Common myeloid progenitor, CD34-positive (primary cell): ENCODE measurements at regions of chr15 and their contacts with region 1.

Region 1: DNA sequence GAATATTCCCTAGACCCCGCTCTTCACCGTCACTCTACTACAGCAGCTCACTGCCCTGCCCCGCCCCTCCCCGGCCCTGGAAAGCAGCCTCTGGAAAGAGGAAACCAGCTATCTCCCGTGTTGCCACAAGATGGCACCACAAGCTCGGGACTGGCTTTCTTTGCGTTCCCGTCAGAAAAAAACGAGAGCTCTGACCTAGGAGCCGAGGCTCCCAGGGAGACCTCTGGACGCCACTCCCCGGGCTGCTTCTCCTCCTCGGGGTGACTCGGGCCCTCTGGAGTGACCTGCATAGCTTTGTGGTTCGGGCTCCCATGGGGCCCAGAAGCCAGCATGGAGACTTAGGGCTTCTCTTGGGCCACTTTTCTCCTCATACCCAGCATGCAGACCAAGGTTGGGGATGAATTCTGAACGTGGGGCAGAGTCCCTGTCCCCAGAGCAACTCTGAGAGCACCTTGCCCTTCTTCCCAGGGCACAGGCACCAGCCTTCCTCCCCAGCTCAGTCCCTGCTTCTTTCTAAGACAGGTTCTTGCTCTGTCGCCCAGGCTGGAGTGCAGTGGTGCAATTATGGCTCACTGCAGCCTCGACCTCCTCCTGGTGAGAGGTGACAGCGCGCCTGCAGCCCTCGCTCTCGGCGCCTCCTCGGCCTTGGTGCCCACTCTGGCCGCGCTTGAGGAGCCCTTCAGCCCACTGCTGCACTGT is 19.0 kb downstream of the STOML1 start:
- DNase-seq: peak; percentile 78 to 89 (median 85)
- H3K4me3 ChIP-seq: peak overlapping the region in 5 of 7 experiments; percentile 19 to 64 (median 43)
- H3K27ac ChIP-seq: no peak overlapping the region
- H3K4me1 ChIP-seq: peaks cover 3 to 37% (median 30%) of the 10 kb centered on the region in 4 experiments
- H3K27me3 ChIP-seq: no peaks in the 10 kb centered on the region

Region 2: GRCh38 chr15:73794443-73795133 is 178.5 kb before region 1 on chr15:
- CTCF ChIA-PET with region 1: no interaction called
- POLR2A ChIA-PET with region 1: no interaction called
- DNase-seq: no peak
- H3K4me3 ChIP-seq: no peak overlapping the region
- H3K27ac ChIP-seq: no peak overlapping the region
- H3K4me1 ChIP-seq: peaks cover 0 to 7% (median 5%) of the 10 kb centered on the region in 4 experiments
- H3K27me3 ChIP-seq: no peaks in the 10 kb centered on the region

Region 3: DNA sequence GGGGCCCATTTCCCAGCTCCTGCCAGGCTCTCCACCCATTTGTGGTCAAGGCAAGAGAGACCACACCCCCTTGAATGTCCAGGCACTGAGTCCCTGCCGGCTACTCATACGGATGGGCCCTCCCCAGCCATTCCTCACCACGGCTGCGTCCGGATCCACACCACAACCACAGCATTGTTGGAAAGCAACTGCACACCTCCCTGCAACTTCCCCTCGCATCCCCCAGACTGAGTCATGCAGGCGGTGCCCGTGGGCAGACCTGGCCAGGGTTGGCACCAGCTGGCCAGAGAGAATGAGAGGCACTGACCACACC is 16.4 kb before region 1 on chr15:
- CTCF ChIA-PET with region 1: interaction called, 18 read pairs
- POLR2A ChIA-PET with region 1: no interaction called
- DNase-seq: peak; percentile 52 to 96 (median 95)
- H3K4me3 ChIP-seq: no peak overlapping the region
- H3K27ac ChIP-seq: no peak overlapping the region
- H3K4me1 ChIP-seq: peaks cover 9 to 97% (median 90%) of the 10 kb centered on the region in 4 experiments
- H3K27me3 ChIP-seq: no peaks in the 10 kb centered on the region

Region 4: GRCh38 chr15:74011610-74012009 is 38.5 kb after region 1 on chr15:
- CTCF ChIA-PET with region 1: interaction called, 24 read pairs
- POLR2A ChIA-PET with region 1: no interaction called
- DNase-seq: no peak
- H3K4me3 ChIP-seq: peak overlapping the region in 4 of 7 experiments; percentile 3 to 61 (median 46)
- H3K27ac ChIP-seq: peak overlapping the region; percentile 55
- H3K4me1 ChIP-seq: peaks cover 11 to 66% (median 40%) of the 10 kb centered on the region in 4 experiments
- H3K27me3 ChIP-seq: no peaks in the 10 kb centered on the region

Region 5: GRCh38 chr15:74044267-74045110 is 71.4 kb after region 1 on chr15:
- CTCF ChIA-PET with region 1: interaction called, 59 read pairs
- POLR2A ChIA-PET with region 1: no interaction called
- DNase-seq: no peak
- H3K4me3 ChIP-seq: no peak overlapping the region
- H3K27ac ChIP-seq: no peak overlapping the region
- H3K4me1 ChIP-seq: peaks cover 0 to 17% (median 8%) of the 10 kb centered on the region in 4 experiments
- H3K27me3 ChIP-seq: no peaks in the 10 kb centered on the region

Region 6: DNA sequence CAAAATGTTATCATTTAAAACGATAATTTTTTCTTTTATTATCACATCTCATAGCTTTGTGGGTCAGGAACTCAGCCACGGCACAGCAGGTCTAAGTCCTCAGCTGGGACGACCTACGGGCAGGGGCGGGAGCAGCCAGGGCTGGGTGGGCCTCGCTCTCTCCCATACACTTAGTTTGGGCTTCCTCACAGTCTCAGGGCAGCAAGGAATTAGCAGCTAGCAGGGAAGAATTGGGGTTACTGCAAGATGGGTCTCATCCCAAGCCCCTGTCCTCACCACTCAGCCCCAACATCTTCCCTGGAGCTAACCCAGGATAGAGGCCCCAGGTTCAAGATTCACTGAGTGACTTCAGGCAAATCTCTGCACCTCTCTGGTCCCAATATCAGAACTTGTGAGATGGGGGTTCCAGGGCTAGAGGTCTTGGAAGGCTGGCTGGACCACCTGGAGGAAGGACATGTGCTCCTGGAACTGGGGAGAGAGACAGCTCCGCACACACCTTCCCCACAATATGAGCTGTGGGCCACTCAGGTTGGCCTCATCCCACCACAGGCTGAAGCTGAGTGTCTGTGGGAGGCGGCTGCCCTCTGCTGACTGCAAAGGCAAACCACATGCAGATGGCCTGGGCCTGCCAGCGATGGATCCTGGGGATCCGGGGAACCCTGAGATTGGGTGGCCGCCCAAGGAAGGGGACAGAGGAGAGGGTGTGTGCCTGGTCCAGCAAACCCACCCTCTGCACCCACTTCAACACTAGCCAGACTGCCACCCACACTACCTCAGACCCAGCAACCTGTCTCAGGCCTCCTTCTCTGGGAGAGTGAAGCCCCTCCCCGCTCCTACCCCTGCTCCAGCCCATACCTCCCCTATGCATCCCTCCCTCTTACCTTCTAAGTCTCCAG is 349.3 kb after region 1 on chr15:
- CTCF ChIA-PET with region 1: interaction called, 12 read pairs
- POLR2A ChIA-PET with region 1: no interaction called
- DNase-seq: peak; percentile 50 to 78 (median 71)
- H3K4me3 ChIP-seq: no peak overlapping the region
- H3K27ac ChIP-seq: no peak overlapping the region
- H3K4me1 ChIP-seq: peaks cover 0 to 53% (median 31%) of the 10 kb centered on the region in 4 experiments
- H3K27me3 ChIP-seq: no peaks in the 10 kb centered on the region